WTC11 (cell line): ENCODE measurements at regions of chr2 and their contacts with region 1.

Region 1: DNA sequence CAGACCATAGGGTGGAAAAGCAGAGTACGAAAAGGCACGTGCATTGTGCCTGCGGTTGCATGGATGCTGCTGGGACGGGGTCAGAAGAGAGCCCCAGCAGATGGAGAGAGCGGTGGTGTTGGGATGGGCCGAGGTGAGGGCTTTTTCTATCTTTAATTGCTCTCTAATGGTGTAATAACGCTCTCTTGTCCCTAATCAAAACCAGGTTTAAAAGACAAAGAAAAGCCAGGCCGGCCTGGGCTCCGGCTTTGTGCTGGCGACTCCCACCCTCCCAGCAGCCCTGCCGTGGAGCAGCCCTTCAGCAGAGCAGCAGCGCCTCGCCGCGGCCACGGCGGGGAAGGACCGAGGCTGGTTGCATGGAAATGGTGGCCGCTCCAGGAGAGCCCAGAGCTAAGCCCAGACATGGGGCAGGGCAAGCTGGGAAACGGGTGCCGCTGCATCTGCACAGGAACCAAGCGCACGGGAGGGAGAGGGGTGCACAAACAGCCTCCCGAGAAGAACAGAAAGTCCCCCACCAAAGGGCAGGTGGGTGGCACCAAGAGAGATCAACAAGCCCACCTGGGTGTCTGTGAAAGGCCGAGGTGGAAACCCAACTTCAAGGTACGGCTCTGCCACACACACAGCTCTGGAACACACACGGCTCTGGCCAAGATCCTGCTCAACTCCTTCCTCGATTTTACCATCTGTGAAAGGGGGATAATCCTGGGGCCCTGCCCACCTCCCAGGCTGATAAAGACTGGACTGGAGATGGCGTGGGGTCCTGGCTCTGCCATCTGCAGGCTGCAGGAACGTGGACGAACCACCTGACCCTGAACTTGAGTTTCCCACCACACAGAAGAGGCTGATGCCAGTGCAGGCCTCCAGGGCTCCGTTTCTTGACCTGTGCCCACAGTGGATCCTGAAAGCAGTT is 15.0 kb downstream of the HS1BP3 start:
- DNase-seq: peak; percentile 93
- ATAC-seq: peak; percentile 96
- H3K4me3 Mint-ChIP-seq: no peak overlapping the region
- H3K27ac Mint-ChIP-seq: no peak overlapping the region
- H3K4me1 Mint-ChIP-seq: peaks cover 33% of the 10 kb centered on the region
- H3K27me3 Mint-ChIP-seq: no peaks in the 10 kb centered on the region
- CTCF ChIP-seq: peak; percentile 75

Region 2: GRCh38 chr2:20378792-20379519 is 257.0 kb before region 1 on chr2:
- CTCF ChIA-PET with region 1: interaction called, 12 read pairs
- POLR2A ChIA-PET with region 1: no interaction called
- DNase-seq: peak; percentile 81
- ATAC-seq: peak; percentile 97
- H3K4me3 Mint-ChIP-seq: no peak overlapping the region
- H3K27ac Mint-ChIP-seq: no peak overlapping the region
- H3K4me1 Mint-ChIP-seq: peaks cover 27% of the 10 kb centered on the region
- H3K27me3 Mint-ChIP-seq: peaks cover 4% of the 10 kb centered on the region; the same call in 1 of the 2 replicates
- CTCF ChIP-seq: peak; percentile 64

Region 3: DNA sequence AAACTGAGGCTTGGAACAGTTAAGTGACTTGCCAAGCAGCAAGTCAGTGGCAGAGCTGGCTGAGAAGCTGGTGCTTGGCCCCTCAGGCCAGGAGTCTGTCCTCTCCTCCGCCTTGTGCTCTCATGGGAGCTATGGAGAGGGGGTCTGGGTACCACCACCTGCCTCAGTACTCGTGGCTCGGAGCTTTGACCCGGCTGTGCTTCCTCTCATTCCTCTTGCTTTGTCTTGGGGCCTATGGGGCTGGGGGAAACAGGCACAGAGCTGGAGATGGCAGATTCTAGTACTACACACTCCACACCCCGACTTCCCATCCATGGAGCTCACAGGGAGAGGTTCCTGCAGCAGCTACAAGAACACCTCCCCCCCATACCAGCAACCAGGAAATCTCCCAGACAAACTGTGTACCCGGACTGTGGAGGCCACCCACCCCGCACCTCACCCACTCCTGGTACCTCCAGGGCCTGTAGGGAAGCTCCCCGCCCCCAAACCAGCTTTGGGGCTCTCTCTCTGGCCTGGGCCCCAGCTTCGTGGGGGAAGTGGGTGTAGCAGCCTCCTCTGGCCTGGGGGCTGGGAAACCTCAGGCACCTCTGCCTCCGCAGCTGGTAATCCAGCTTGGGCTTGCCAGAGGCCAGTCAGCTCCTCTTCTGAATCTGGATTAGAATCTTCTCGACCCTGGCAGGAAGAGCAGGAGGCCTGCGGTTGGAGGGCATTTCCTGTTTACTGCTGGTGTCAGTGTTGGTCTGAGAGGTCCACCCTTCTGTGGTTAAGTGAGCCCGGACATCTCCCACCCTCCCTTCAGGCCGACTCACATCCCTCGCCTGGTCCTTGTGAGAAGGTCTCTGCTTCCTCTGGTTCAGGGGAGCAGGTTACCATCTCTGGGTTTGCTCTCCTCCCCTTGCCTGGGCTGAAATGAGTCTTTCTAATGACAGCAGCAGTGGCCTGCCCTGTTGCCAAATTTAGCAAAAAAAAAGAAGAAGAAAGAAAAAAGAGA is 211.3 kb before region 1 on chr2:
- CTCF ChIA-PET with region 1: interaction called, 11 read pairs
- POLR2A ChIA-PET with region 1: no interaction called
- DNase-seq: no peak
- ATAC-seq: no peak
- H3K4me3 Mint-ChIP-seq: no peak overlapping the region
- H3K27ac Mint-ChIP-seq: no peak overlapping the region
- H3K4me1 Mint-ChIP-seq: peaks cover 9% of the 10 kb centered on the region
- H3K27me3 Mint-ChIP-seq: no peaks in the 10 kb centered on the region
- CTCF ChIP-seq: no peak

Region 4: DNA sequence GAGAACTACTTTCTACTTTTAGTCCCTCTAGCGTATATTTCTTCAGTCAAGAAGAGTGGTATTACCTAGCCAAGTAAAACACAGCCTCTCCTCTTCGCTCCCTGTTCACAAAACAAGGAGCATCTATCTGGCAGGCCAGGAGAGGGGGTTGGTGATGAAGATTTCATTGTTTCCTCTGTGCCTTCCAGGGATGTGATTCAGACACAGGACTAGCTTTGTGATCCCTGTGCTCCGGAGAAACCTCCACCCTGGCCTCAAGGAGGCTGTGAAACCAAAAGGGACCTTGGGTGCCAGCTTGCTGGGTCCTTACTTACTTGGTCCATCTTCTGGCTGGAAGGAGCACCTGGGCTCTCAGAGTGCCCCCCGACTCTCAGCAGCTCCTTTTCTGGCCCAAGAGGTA is 183.4 kb before region 1 on chr2:
- CTCF ChIA-PET with region 1: interaction called, 118 read pairs
- POLR2A ChIA-PET with region 1: interaction called, 42 read pairs
- DNase-seq: no peak
- ATAC-seq: peak; percentile 11; the same call in 1 of the 2 replicates
- H3K4me3 Mint-ChIP-seq: no peak overlapping the region
- H3K27ac Mint-ChIP-seq: no peak overlapping the region
- H3K4me1 Mint-ChIP-seq: peaks cover 26% of the 10 kb centered on the region
- H3K27me3 Mint-ChIP-seq: peaks cover 62% of the 10 kb centered on the region
- CTCF ChIP-seq: no peak

Region 5: GRCh38 chr2:20625491-20626391 is 10.2 kb before region 1 on chr2:
- CTCF ChIA-PET with region 1: interaction called, 13 read pairs
- POLR2A ChIA-PET with region 1: no interaction called
- DNase-seq: no peak
- ATAC-seq: no peak
- H3K4me3 Mint-ChIP-seq: no peak overlapping the region
- H3K27ac Mint-ChIP-seq: 0 out of 2 replicates have a peak overlapping the region, but pooled peaks have one; percentile 30
- H3K4me1 Mint-ChIP-seq: no peaks in the 10 kb centered on the region
- H3K27me3 Mint-ChIP-seq: no peaks in the 10 kb centered on the region
- CTCF ChIP-seq: no peak